Activated T-helper 1 cell treated with anti-CD3 and anti-CD28 coated beads, Interleukin-12 subunit alpha, Interleukin-12 subunit beta, Interleukin-2, Interleukin-4 antibody, amounts not matched to agents 30 ng/mL and 10 ng/mL and 1 ng/mL, durations not matched to agents 14 hours and 24 hours and 36 hours (primary cell): ENCODE measurements at regions of chr4 and their contacts with region 1.

Region 1: DNA sequence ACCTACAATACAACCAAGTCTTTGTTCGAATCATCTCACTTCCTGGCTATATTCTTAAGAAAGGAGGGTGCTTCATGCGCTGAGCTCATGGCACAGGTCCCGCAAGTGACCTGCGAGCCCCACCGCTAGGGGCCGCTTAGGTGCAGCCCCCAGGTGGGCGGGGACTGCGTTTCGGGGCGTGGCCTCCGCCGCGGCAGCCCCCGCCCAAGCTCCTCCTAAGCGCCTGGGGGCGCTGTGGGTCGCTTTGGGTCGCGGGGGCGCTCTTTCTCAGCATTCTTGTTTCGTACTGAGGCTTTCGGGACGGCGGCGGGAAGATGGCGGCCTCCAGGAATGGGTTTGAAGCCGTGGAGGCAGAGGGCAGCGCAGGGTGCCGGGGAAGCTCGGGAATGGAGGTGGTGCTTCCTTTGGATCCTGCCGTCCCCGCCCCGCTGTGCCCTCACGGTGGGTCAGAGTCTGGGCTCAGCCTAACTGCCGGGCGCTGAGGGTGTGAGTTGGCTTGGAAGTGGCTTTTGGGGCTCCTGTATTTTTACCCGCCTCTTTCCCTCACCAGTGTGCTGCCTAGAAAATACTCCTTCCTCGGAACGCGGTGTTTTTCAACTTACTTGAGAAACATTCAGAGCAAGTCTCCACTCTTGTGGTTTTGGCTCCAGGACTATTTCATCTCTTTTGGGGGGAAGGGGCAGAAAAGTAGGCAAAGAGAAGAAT is at the start of gene ZCCHC4:
- DNase-seq: peak; percentile 87
- H3K4me3 Mint-ChIP-seq: peak within 1 kb of the TSS; percentile 99
- H3K27ac Mint-ChIP-seq: peak within 1 kb of the TSS; percentile 92
- H3K4me1 Mint-ChIP-seq: peaks cover 34% of the 10 kb centered on the region
- H3K27me3 Mint-ChIP-seq: no peaks in the 10 kb centered on the region
- total RNA-seq, gene ZCCHC4: 13.5 and 15.3 TPM in 2 replicates

Region 2: DNA sequence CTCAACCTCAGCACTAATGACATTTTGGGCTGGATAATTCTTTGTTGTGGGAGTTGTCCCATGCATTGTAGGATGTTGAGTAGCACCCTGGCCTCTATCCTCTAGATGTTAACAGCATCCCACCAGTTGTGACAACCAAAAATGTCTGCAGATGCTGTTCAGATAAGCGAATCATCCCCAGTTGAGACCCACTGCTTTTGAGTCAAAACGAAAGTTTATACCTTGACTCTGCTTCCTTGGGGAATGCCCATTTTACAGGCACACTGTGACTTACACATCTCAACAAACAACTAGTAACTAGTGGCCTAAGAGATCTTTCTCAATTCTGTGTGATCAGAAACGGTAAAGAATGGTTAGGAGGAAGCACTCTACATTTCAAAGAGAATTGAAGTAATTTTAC is 189.4 kb before region 1 on chr4:
- intact Hi-C with region 1: loop called (anchors 1 kb)
- DNase-seq: peak; percentile 26
- H3K4me3 Mint-ChIP-seq: no peak overlapping the region
- H3K27ac Mint-ChIP-seq: peak overlapping the region; percentile 64
- H3K4me1 Mint-ChIP-seq: peaks cover 22% of the 10 kb centered on the region
- H3K27me3 Mint-ChIP-seq: no peaks in the 10 kb centered on the region

Region 3: DNA sequence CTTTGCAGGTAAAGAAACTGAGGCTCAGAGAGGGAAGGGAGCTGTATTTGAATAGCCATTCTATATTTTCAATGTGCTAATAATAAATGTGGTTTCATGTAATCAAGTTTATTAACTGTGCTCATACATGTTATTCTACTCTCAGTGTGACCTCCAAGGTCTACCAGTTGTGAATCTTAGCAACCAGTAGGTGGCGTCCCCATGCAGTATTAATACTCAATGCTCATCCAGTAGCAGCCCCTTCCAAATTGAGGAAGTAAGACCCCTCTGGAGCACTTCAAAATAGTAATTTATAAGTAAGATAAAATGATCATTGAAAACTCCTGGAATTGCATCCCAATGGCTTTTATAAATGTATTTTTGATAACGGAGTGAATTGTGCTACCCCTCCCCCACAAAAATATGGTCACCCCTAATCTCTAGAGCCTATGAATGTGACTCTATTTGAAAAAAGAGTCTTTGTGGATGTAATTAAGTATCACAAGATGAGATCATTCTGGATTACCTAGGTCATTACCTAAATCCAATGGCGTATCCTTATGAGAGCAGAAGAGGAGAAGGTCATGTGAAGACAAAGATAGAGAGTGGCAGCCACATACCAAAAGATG is 132.0 kb before region 1 on chr4:
- intact Hi-C with region 1: loop called (anchors 1 kb)
- DNase-seq: no peak
- H3K4me3 Mint-ChIP-seq: no peak overlapping the region
- H3K27ac Mint-ChIP-seq: no peak overlapping the region
- H3K4me1 Mint-ChIP-seq: peaks cover 29% of the 10 kb centered on the region
- H3K27me3 Mint-ChIP-seq: no peaks in the 10 kb centered on the region

Region 4: DNA sequence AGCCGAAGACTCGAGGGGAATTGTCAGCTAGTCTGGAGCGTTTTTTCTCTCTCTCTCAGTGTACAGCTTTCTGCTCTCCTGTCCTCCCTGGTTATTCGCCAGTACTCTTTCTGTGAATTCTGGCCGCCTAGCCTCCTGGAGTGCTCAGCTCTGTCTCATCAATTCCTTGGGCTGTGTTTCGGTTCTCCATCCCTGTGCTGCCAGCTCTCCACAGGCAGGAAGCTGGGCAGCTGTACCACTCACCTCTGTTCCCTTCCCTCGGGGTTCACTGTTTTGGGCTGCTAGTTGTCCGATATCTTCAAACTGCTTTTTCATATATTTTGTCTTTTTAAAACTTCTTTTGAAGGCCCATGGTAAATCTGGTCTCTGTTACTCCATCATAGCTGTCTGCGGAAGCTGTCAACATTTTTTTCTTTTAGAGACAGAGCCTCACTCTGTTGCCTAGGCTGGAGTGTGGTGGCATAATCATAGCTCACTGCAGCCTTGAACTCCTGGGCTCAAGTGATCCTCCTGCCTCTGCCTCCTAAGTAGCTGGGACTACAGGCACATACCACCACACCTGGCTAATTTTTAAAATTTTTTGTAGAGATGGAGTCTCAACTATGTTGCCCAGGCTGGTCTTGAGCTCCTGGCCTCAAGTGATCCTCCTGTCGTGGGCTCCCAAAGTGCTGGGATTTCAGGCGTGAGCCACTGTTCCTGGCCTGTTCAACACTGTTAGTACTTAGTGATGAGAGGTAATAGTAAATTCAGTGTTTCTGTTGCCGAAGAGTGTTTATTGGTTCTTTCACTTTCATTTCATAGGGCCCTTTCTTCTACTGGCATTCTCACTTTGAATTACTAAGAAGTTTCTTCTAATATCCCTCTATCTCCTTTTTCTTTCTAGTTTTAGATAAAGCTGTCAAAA is 18.5 kb after region 1 on chr4:
- intact Hi-C with region 1: loop called (anchors 1 kb)
- DNase-seq: no peak
- H3K4me3 Mint-ChIP-seq: peak overlapping the region; percentile 79
- H3K27ac Mint-ChIP-seq: peak overlapping the region; percentile 92
- H3K4me1 Mint-ChIP-seq: peaks cover 19% of the 10 kb centered on the region
- H3K27me3 Mint-ChIP-seq: no peaks in the 10 kb centered on the region

Region 5: DNA sequence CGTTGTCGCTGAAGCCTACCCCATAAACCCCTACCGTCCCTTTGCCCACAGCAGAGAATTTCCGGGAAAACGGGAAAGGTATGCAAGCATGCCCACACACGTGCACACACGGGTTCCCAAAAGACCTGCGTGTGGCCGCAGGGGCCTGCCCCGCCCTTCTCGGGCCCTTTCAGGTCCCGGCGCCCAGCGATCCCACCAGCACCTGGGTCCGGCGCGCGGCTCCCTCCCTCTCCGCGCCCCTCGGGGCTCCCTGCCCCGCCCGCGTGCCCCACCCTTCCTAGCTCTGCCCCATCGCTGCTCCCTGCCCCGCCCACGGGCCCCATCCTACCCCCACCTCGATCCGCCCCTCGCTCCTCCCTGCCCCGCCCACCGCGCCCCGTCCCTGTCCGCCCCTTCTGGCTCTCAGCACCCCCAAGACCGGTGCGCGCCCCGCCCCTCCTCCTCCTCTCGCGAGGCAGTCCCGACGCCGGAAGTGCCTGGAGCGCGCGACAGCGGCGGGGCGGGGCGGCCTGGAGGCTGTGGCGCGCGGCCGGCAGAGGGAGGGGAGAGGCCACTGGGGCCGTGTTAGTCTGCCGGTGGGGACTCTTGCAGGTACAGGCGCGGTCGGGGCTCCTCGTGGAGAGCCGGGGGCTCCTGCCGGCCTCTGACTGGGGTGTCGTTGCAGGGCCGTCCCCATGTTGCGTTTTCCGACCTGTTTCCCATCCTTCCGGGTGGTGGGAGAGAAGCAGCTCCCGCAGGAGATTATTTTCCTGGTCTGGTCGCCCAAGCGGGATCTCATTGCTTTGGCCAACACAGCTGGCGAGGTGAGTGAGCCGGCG is 64.3 kb after region 1 on chr4 and contains the start of gene ANAPC4:
- intact Hi-C with region 1: loop called (anchors 1 kb)
- DNase-seq: peak; percentile 95
- H3K4me3 Mint-ChIP-seq: no peak within 1 kb of the TSS
- H3K27ac Mint-ChIP-seq: peak within 1 kb of the TSS; percentile 91
- H3K4me1 Mint-ChIP-seq: no peaks in the 10 kb centered on the region
- H3K27me3 Mint-ChIP-seq: no peaks in the 10 kb centered on the region
- total RNA-seq, gene ANAPC4: 36.0 and 39.9 TPM in 2 replicates

Region 6: GRCh38 chr4:25913851-25914669 is 601.4 kb after region 1 on chr4 and contains the start of gene SMIM20:
- intact Hi-C with region 1: loop called (anchors 1 kb)
- DNase-seq: peak; percentile 88
- H3K4me3 Mint-ChIP-seq: peak within 1 kb of the TSS; percentile 94
- H3K27ac Mint-ChIP-seq: peak within 1 kb of the TSS; percentile 99
- H3K4me1 Mint-ChIP-seq: peaks cover 24% of the 10 kb centered on the region
- H3K27me3 Mint-ChIP-seq: peaks cover 5% of the 10 kb centered on the region
- total RNA-seq, gene SMIM20: 19.2 and 21.5 TPM in 2 replicates